Activated CD8-positive, alpha-beta memory T cell treated with anti-CD3 and anti-CD28 coated beads, Interleukin-2, amount 10 ng/mL, durations not matched to agents 7 days and 5 days (primary cell): ENCODE measurements at regions of chr7 and their contacts with region 1.

Region 1: DNA sequence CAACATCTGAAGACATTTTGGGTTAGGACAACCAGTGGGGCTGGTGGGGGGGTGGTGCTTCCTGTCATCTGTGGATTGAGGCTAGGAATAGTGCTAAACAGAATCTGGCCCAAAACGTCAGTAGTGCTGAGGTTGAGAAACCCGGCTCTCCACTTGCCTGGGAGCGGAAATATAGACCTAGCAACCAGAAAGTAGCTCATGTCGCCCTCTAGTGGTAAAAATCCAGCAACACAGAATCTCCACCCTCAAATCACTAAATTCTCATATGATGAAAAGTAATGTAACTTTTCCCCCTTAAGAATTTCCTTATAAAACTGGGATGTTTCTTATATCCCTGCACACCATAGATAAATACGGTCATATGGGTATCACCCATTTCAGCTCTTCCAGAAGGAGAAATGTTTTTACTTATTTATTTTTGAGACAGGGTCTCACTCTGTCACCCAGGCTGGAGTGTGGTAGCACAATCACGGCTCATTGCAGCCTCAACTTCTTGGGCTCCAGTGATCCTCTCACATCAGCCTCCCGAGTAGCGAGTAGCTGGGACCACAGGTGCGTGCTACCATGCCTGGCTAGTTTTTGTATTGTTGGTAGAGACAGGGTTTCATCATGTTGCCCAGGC is 34.4 kb downstream of the ZC3HAV1 start:
- DNase-seq: peak; percentile 83
- ATAC-seq: peak; percentile 68
- H3K4me3 Mint-ChIP-seq: peak overlapping the region; percentile 45
- H3K27ac Mint-ChIP-seq: peak overlapping the region; percentile 84
- H3K4me1 Mint-ChIP-seq: peaks cover 70% of the 10 kb centered on the region
- H3K27me3 Mint-ChIP-seq: no peaks in the 10 kb centered on the region

Region 2: GRCh38 chr7:138961159-138961558 is 114.0 kb before region 1 on chr7:
- CTCF ChIA-PET with region 1: no interaction called
- DNase-seq: no peak
- ATAC-seq: no peak
- H3K4me3 Mint-ChIP-seq: no peak overlapping the region
- H3K27ac Mint-ChIP-seq: no peak overlapping the region
- H3K4me1 Mint-ChIP-seq: peaks cover 3% of the 10 kb centered on the region
- H3K27me3 Mint-ChIP-seq: peaks cover 12% of the 10 kb centered on the region

Region 3: GRCh38 chr7:139016931-139017511 is 58.1 kb before region 1 on chr7:
- CTCF ChIA-PET with region 1: interaction called, 23 read pairs
- DNase-seq: peak; percentile 77
- ATAC-seq: peak; percentile 96
- H3K4me3 Mint-ChIP-seq: no peak overlapping the region
- H3K27ac Mint-ChIP-seq: no peak overlapping the region
- H3K4me1 Mint-ChIP-seq: peaks cover 7% of the 10 kb centered on the region
- H3K27me3 Mint-ChIP-seq: peaks cover 22% of the 10 kb centered on the region

Region 4: DNA sequence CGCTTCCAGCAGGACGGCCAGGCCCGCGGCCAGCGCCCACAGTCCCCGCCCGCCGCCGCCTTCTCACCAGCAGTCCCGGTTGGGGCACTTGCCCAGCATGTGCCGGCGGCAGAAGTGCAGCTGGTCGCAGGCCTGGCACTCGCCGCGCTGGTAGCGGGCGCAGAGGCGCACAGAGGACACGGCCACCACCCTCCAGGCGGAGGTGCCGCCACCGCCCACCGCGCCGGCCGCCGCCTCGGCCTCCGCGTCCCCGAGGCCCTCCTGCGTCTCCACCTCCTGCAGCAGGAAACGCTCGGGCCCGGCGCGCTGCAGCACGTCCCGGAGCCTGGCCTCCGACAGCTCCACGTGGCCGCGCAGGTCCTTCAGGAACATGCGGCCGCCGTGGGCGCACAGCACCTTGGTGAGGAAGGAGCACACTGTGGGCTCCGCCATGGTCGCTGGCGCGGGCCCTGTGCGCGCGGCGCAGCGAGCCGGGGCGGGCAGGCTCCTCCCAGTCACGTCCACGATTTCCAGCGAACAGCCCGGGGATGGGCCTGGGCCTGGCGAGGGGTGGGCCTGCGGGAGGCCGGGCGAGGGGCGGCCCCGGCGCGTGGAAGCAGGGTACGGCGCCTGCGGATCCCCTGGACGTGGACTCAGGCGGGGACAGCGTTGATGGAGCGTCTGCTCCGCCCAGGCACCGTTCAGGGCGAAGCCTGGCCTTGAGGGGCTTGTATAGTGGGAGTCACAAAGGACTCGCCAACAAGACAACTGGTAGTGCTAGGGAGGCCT is 39.4 kb before region 1 on chr7 and contains the start of gene ZC3HAV1L:
- CTCF ChIA-PET with region 1: interaction called, 12 read pairs
- DNase-seq: peak; percentile 66
- ATAC-seq: peak; percentile 87
- H3K4me3 Mint-ChIP-seq: peak within 1 kb of the TSS; percentile 75
- H3K27ac Mint-ChIP-seq: peak within 1 kb of the TSS; percentile 77
- H3K4me1 Mint-ChIP-seq: peaks cover 32% of the 10 kb centered on the region
- H3K27me3 Mint-ChIP-seq: peaks cover 7% of the 10 kb centered on the region
- total RNA-seq, gene ZC3HAV1L: 15.7 to 17.9 TPM

Region 5: GRCh38 chr7:139060695-139061237 is 14.4 kb before region 1 on chr7:
- CTCF ChIA-PET with region 1: interaction called, 20 read pairs
- DNase-seq: no peak
- ATAC-seq: no peak
- H3K4me3 Mint-ChIP-seq: no peak overlapping the region
- H3K27ac Mint-ChIP-seq: peak overlapping the region; percentile 70
- H3K4me1 Mint-ChIP-seq: peaks cover 59% of the 10 kb centered on the region
- H3K27me3 Mint-ChIP-seq: no peaks in the 10 kb centered on the region

Region 6: GRCh38 chr7:139086454-139086853 is 11.3 kb after region 1 on chr7:
- CTCF ChIA-PET with region 1: interaction called, 21 read pairs
- DNase-seq: no peak
- ATAC-seq: no peak
- H3K4me3 Mint-ChIP-seq: no peak overlapping the region
- H3K27ac Mint-ChIP-seq: peak overlapping the region; percentile 84
- H3K4me1 Mint-ChIP-seq: peaks cover 80% of the 10 kb centered on the region
- H3K27me3 Mint-ChIP-seq: no peaks in the 10 kb centered on the region

Region 7: GRCh38 chr7:139095194-139095659 is 20.1 kb after region 1 on chr7:
- CTCF ChIA-PET with region 1: interaction called, 23 read pairs
- DNase-seq: peak; percentile 94
- ATAC-seq: peak; percentile 84
- H3K4me3 Mint-ChIP-seq: peak overlapping the region; percentile 81
- H3K27ac Mint-ChIP-seq: peak overlapping the region; percentile 96
- H3K4me1 Mint-ChIP-seq: peaks cover 86% of the 10 kb centered on the region
- H3K27me3 Mint-ChIP-seq: no peaks in the 10 kb centered on the region

Region 8: GRCh38 chr7:139133335-139134139 is 58.4 kb after region 1 on chr7:
- CTCF ChIA-PET with region 1: interaction called, 10 read pairs
- DNase-seq: peak; percentile 92
- ATAC-seq: peak; percentile 99
- H3K4me3 Mint-ChIP-seq: peak overlapping the region; percentile 78
- H3K27ac Mint-ChIP-seq: peak overlapping the region; percentile 66
- H3K4me1 Mint-ChIP-seq: peaks cover 18% of the 10 kb centered on the region
- H3K27me3 Mint-ChIP-seq: peaks cover 2% of the 10 kb centered on the region

Region 9: GRCh38 chr7:139203992-139204391 is 128.8 kb after region 1 on chr7:
- CTCF ChIA-PET with region 1: no interaction called
- DNase-seq: no peak
- ATAC-seq: no peak
- H3K4me3 Mint-ChIP-seq: no peak overlapping the region
- H3K27ac Mint-ChIP-seq: no peak overlapping the region
- H3K4me1 Mint-ChIP-seq: no peaks in the 10 kb centered on the region
- H3K27me3 Mint-ChIP-seq: peaks cover 8% of the 10 kb centered on the region